Heart right ventricle (tissue), 16 donors: ENCODE measurements at regions of chr15 and their contacts with region 1.

Region 1: GRCh38 chr15:83928392-83928734 is 274.4 kb downstream of the ADAMTSL3 start:
- DNase-seq: no peak
- ATAC-seq: no peak
- H3K4me3 ChIP-seq: no peak overlapping the region
- H3K27ac ChIP-seq: no peak overlapping the region
- H3K4me1 ChIP-seq: peaks cover 0 to 15% (median 0%) of the 10 kb centered on the region in 9 donors
- H3K27me3 ChIP-seq: no peaks in the 10 kb centered on the region
- CTCF ChIP-seq: no peak

Region 2: DNA sequence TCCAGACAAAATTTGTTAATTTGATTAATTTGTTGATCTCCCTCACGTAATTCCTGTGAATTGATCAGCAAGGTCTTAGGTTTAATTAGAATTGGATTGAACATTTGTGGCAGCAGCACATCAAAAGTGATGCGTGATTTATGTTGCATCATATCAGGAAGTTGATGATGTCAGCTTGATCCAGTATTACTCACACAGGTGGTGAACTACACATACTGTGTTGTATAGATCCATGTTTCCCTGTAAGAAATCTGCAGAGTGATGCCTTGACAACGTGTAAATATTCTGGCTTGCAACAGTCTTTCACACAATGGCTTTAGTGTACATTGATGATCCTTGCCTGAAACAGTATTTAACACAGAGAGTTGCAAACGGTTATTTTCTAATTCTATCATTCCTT is 74.0 kb before region 1 on chr15:
- intact Hi-C with region 1: loop called in 1 of 10 experiments (anchors 10 kb)
- DNase-seq: no peak
- ATAC-seq: no peak
- H3K4me3 ChIP-seq: no peak overlapping the region
- H3K27ac ChIP-seq: no peak overlapping the region
- H3K4me1 ChIP-seq: peaks cover 3 to 41% (median 17%) of the 10 kb centered on the region in 9 donors
- H3K27me3 ChIP-seq: no peaks in the 10 kb centered on the region
- CTCF ChIP-seq: no peak

Region 3: DNA sequence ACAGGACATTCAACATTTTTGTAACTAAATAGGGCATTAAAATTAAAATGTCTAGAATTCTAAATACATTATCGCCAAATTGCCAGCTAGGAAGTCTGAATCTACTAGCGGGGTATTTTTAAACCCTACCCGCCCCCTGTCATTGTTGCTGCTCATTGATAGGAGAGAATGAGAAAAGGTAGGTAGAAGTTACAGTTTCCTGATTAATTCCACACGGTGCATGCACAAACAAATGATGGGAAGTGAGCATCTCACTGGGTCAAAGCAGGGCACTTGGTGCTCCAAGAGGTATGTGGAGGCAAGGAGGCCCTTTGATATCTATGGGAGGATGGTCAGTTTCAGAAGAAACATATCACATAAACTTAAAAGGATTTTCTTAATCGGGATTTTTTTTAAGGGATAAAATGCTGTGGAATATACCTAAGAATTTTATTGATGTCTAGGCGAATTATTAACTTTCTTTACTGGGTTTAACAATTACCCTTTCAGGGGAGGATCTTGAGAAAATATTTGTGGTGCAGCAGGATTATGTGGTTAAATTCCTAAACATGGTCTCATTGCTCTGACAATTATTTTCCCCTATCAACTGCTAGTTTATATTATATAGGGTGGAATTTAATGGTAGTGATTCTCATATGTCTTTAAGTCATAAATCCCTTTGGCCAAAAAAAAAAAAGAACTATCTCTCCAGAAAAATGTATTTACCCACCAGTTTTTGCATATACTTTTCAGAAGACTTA is 71.2 kb after region 1 on chr15:
- intact Hi-C with region 1: loop called in 1 of 10 experiments (anchors 10 kb)
- DNase-seq: no peak
- ATAC-seq: no peak
- H3K4me3 ChIP-seq: no peak overlapping the region
- H3K27ac ChIP-seq: no peak overlapping the region
- H3K4me1 ChIP-seq: no peaks in the 10 kb centered on the region
- H3K27me3 ChIP-seq: no peaks in the 10 kb centered on the region
- CTCF ChIP-seq: no peak